ENCODE measurements at regions of chr14 and their contacts with region 1.

Region 1: DNA sequence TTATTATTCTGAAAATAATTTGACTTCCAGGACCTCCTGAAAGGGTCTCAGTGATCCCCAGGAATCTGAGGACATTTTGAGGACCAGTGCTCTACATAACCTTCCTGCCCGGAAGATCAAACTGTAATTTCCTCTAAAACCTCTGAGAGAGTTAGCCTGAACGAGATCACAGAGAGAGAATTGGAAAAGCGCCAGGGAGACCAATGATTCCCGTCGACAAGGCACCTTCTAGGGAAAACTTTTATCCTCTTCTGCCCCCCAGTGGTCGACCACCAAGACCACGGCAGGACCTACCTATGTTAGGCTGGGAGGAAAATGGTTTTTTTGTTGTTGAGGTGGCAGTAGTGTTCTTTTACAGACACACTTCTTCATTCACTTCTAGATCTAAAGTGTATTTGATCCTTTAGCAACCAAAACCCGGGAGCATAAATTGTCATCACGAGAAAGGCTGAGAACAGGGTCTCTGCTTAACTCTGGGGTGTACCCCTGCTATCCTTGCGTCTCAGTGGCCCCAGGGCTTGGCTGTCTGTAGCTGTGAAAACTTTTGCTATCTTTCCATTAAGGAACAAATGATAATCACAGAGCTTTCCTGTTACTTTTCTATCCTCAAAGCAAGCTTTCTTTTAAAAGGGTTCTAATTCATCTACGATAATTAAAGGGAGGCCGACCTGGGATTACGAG is 62.9 kb upstream of the NID2 start:
- DNase-seq: peak; percentile 79
- H3K4me3 ChIP-seq: no peak overlapping the region
- H3K27ac ChIP-seq: no peak overlapping the region
- H3K4me1 ChIP-seq: peaks cover 5% of the 10 kb centered on the region
- H3K27me3 ChIP-seq: no peaks in the 10 kb centered on the region
- CTCF ChIP-seq: peak; percentile 66 to 84

Region 2: DNA sequence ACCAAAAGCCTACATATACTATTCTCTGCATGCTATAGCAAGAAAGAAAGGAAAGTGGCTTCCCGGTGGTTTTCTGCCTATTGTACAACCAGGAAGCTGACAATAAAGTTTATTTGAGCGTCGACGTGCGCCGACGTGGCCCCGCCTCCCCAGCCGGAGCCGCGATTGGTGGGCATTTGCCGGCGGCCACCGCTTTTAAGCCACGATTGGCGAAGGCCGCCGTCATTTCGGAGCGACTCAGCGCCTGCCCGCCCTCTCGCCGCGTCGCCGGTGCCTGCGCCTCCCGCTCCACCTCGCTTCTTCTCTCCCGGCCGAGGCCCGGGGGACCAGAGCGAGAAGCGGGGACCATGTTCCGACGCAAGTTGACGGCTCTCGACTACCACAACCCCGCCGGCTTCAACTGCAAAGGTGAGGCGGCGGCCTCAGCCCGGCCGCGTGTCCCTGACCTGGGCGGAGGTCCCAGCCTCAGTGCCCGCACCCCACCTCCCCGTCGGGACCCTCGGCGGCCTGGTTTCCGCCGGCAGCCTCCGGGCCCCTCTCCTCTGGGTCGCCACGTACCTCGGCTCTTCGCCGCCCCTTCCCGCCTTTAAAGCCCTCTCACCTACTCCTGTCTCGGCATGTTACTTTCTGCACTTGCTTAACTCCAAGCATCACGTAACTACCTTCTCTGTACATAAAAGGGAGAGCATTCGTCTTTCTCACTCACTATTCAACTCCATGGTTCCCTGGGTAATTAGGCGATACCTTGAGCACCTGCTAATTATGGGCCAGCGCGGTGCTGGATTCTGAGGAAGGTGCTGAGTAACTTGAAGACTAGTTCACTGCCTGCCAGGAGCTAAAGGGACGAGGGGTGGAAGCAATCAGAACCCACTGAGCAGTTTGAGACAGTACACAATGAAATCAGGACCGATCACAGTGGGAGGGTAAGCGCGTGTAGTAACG is 142.2 kb before region 1 on chr14 and contains the start of gene RTRAF:
- CTCF ChIA-PET with region 1: no interaction called
- dilution Hi-C with region 1: no loop called
- in situ Hi-C with region 1: no loop called
- intact Hi-C with region 1: loop called (anchors 2 kb)
- DNase-seq: peak; percentile 91
- H3K4me3 ChIP-seq: peak within 1 kb of the TSS; percentile 58 to 98 (median 69)
- H3K27ac ChIP-seq: peak within 1 kb of the TSS; percentile 69
- H3K4me1 ChIP-seq: peaks cover 6% of the 10 kb centered on the region
- H3K27me3 ChIP-seq: no peaks in the 10 kb centered on the region
- CTCF ChIP-seq: no peak
- total RNA-seq, gene RTRAF: 52.7 to 176 TPM

Region 3: DNA sequence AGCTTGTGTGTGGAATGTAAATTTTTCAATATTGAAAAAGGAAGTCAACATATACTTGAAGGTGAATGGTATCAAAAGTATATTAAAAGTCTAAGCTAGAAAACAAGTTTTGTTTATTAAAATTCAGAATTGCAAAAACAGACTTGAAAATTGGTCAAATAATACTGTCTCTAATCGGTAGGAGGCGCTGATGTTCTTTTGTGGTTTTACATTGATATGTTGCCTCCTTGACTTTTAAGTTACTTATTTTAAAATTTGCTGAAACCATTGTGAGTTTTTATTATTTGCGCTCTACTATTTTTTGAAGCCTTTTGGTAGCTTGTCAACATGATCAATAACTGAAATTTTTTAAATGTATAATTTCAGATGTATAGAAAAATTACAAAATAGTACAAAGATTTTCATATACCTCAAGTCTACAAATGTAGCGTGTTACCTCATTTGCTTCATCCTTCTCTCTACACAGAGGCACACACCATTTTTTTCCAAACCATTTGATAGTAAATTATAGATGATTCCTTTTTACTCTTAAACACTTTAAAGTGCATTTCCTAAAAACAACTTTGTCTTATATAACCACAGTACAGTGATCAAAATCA is 135.5 kb before region 1 on chr14:
- CTCF ChIA-PET with region 1: no interaction called
- dilution Hi-C with region 1: no loop called
- in situ Hi-C with region 1: no loop called
- intact Hi-C with region 1: loop called (anchors 1 kb)
- DNase-seq: no peak
- H3K4me3 ChIP-seq: no peak overlapping the region
- H3K27ac ChIP-seq: no peak overlapping the region
- H3K4me1 ChIP-seq: no peaks in the 10 kb centered on the region
- H3K27me3 ChIP-seq: no peaks in the 10 kb centered on the region
- CTCF ChIP-seq: peak; percentile 27 to 48

Region 4: DNA sequence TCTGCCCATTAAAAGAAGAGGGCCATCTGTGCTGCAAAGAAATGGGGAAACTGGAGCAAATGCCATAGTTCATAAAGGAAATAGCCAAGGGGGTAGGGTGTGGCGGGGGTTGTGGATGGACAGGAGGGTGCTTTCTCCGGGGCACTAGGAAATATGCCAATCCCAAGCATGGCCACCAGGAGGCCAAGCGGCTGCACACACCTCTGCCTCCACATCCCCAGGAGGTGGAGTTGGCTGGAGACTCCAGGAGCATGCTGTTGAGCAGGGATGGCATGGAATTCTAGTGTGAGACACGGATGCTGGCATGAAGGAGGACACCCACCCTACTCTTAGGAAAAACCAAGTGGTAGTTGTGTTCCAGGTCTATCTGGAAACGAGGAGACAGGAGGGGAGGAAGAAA is 88.1 kb before region 1 on chr14:
- CTCF ChIA-PET with region 1: no interaction called
- dilution Hi-C with region 1: loop called (anchors 5 kb)
- in situ Hi-C with region 1: loop called in 1 of 2 experiments (anchors 25 kb)
- intact Hi-C with region 1: loop called (anchors 1 kb)
- DNase-seq: no peak
- H3K4me3 ChIP-seq: no peak overlapping the region
- H3K27ac ChIP-seq: no peak overlapping the region
- H3K4me1 ChIP-seq: peaks cover 9% of the 10 kb centered on the region
- H3K27me3 ChIP-seq: no peaks in the 10 kb centered on the region
- CTCF ChIP-seq: peak; percentile 61 to 75

Region 5: DNA sequence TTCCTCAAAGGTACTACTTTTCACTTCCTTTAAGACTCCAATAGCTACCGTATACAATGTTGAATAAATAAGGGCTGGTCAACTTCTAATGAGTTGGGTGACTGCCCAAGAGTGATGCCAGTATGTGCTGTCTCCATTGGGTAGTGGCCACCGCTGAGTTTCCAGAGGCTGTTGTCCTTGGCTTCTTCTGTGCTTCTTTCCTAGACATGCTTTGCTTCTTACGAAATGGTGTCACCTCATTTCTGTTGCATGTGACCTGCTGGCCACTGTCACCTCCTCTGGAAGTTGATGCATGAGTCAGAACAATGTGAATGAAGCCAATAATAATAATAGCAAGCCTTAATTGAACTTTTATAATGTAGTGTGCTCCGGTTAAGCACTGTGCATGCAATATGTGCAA is 55.4 kb before region 1 on chr14:
- CTCF ChIA-PET with region 1: no interaction called
- dilution Hi-C with region 1: no loop called
- in situ Hi-C with region 1: no loop called
- intact Hi-C with region 1: loop called (anchors 2 kb)
- DNase-seq: peak; percentile 47
- H3K4me3 ChIP-seq: no peak overlapping the region
- H3K27ac ChIP-seq: no peak overlapping the region
- H3K4me1 ChIP-seq: peaks cover 56% of the 10 kb centered on the region
- H3K27me3 ChIP-seq: no peaks in the 10 kb centered on the region
- CTCF ChIP-seq: no peak